Activated CD4-positive, alpha-beta T cell treated with anti-CD3 and anti-CD28 coated beads, Interleukin-2, amount 10 ng/mL, durations not matched to agents 7 days and 5 days (primary cell): ENCODE measurements at regions of chr12 and their contacts with region 1.

Region 1: DNA sequence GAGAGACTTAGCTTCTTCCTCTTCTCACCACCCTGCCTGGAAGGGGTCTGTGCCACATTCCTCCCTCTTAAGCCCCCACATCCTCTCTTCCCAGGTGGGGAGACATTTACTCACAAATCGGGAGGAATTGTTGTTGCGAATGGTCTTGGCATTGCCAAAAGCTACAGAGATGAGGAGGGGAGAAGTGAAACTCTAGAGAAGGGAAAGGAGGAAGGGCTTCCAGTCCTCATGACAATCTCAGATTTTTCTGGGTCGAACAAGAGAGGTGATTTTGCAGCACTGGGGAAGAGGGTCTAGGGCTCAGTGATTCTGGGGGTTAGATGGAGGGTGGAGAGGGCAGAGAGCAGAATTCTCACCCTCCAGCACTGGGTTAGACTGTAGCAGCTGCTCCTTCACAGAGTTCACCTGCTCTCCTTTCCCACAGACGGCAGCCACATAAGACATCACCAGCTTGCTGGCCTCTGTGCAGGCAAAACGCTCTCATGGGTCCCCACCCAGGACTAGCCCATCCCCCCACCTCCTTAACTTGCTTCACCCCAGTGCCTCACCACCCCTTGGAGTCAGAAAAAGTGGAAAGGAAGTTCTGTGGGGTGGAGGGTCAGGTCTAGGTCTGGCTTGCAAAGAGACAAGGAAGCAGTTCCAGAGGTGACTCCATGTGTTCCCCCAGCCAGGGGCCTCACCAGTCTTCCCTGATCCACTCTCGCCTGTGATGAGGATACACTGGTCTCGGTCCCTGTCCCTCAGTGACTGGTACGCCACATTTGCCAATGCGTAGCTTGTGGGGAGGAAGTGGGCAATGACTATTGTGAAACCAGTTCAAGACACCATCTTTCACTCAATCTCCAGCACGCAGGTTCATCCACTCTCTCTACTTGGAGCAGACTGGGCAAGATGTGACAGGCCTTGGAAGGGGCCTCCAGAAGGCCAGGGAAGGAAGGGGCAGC is 2.7 kb downstream of the MYO1A start:
- DNase-seq: peak; percentile 71
- H3K4me3 Mint-ChIP-seq: peak overlapping the region; percentile 8
- H3K27ac Mint-ChIP-seq: peak overlapping the region; percentile 85
- H3K4me1 Mint-ChIP-seq: peaks cover 38% of the 10 kb centered on the region
- H3K27me3 Mint-ChIP-seq: no peaks in the 10 kb centered on the region

Region 2: GRCh38 chr12:56601503-56601902 is 445.7 kb before region 1 on chr12:
- CTCF ChIA-PET with region 1: no interaction called
- POLR2A ChIA-PET with region 1: no interaction called
- DNase-seq: peak; percentile 40
- H3K4me3 Mint-ChIP-seq: no peak overlapping the region
- H3K27ac Mint-ChIP-seq: no peak overlapping the region
- H3K4me1 Mint-ChIP-seq: no peaks in the 10 kb centered on the region
- H3K27me3 Mint-ChIP-seq: no peaks in the 10 kb centered on the region

Region 3: GRCh38 chr12:57005980-57006808 is 41.0 kb before region 1 on chr12 and contains the start of gene ZBTB39:
- CTCF ChIA-PET with region 1: interaction called, 12 read pairs
- POLR2A ChIA-PET with region 1: no interaction called
- DNase-seq: peak; percentile 55
- H3K4me3 Mint-ChIP-seq: peak within 1 kb of the TSS; percentile 90
- H3K27ac Mint-ChIP-seq: peak within 1 kb of the TSS; percentile 87
- H3K4me1 Mint-ChIP-seq: peaks cover 61% of the 10 kb centered on the region
- H3K27me3 Mint-ChIP-seq: no peaks in the 10 kb centered on the region
- total RNA-seq, gene ZBTB39: 8.8 to 9.5 TPM

Region 4: GRCh38 chr12:57031138-57031725 is 16.0 kb before region 1 on chr12:
- CTCF ChIA-PET with region 1: interaction called, 31 read pairs
- POLR2A ChIA-PET with region 1: no interaction called
- DNase-seq: peak; percentile 39
- H3K4me3 Mint-ChIP-seq: no peak overlapping the region
- H3K27ac Mint-ChIP-seq: peak overlapping the region; percentile 28
- H3K4me1 Mint-ChIP-seq: peaks cover 47% of the 10 kb centered on the region
- H3K27me3 Mint-ChIP-seq: no peaks in the 10 kb centered on the region

Region 5: GRCh38 chr12:57063991-57064685 is 16.9 kb after region 1 on chr12:
- CTCF ChIA-PET with region 1: interaction called, 12 read pairs
- POLR2A ChIA-PET with region 1: no interaction called
- DNase-seq: peak; percentile 78
- H3K4me3 Mint-ChIP-seq: peak overlapping the region; percentile 73
- H3K27ac Mint-ChIP-seq: peak overlapping the region; percentile 96
- H3K4me1 Mint-ChIP-seq: peaks cover 42% of the 10 kb centered on the region
- H3K27me3 Mint-ChIP-seq: no peaks in the 10 kb centered on the region

Region 6: DNA sequence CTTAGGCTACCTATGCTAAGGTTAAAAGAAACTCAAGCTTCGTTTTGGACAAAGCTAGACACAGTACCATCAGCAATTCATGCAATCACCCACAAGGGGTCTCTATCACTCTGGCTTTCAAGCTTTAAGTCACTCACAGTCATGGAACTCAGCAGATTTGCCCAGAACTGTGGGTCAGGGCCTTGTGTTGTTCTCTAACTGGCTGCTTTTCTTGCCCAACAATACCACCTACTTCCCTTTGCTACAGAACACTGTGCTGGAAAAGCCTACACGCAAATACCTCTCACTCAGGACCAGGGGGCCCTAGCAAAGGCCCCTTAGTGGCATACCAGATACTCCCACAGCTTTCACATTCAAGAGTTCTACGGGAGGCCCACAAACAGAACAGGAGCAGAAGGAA is 22.3 kb after region 1 on chr12:
- CTCF ChIA-PET with region 1: interaction called, 12 read pairs
- POLR2A ChIA-PET with region 1: no interaction called
- DNase-seq: peak; percentile 79
- H3K4me3 Mint-ChIP-seq: no peak overlapping the region
- H3K27ac Mint-ChIP-seq: peak overlapping the region; percentile 86
- H3K4me1 Mint-ChIP-seq: peaks cover 51% of the 10 kb centered on the region
- H3K27me3 Mint-ChIP-seq: no peaks in the 10 kb centered on the region

Region 7: GRCh38 chr12:57280211-57281062 is 233.2 kb after region 1 on chr12:
- CTCF ChIA-PET with region 1: no interaction called
- POLR2A ChIA-PET with region 1: no interaction called
- DNase-seq: peak; percentile 68
- H3K4me3 Mint-ChIP-seq: peak overlapping the region; percentile 12
- H3K27ac Mint-ChIP-seq: peak overlapping the region; percentile 91
- H3K4me1 Mint-ChIP-seq: peaks cover 23% of the 10 kb centered on the region
- H3K27me3 Mint-ChIP-seq: no peaks in the 10 kb centered on the region